ENCODE measurements at regions of chr7 and their contacts with region 1.

Region 1: DNA sequence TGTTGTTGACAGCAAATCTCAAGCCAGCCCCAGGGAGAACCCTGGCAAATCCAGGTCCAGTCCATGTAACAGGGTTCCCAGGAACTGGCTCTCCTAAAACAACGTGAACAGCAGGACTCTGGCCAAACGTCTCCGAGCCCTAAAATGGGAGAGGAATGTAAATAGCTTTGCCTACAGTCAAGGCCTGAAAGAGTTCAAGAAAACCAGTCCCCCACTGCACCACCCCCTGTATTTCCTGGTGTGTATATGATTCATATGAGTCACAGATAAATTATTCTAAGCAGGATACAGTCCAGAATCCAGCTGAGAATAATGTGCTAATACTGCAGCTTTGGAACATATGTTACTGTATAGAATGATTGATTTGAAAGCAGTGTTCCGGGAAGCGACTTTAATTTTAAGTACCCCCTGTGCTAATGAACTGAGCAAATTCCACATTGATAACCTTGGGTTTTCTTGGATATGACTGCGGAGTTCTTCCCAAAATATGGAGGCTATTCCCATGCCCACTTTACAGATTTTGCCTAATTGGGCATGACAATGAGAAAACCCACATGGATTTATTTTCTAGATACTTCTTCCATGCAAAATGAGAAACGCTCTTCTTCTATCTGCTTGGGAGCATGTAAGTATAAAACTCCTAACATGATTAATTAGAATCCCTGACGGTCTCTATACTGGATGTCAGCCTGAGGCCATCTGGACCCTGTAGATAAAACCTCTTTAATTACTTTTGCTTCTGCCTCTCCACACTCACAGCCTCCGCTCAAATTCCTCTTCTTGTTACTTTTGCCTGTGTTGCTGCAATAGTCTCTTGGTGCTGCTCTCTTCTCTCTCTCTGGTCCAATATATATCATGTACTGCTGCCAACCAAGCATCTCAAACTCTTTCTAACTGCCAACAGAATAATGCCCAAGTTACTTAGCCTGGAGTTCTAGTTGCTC is 50.2 kb downstream of the LAMB4 start:
- DNase-seq: no peak
- ATAC-seq: peak; percentile 38

Region 2: GRCh38 chr7:108026647-108027046 is 53.3 kb before region 1 on chr7:
- intact Hi-C with region 1: loop called (anchors 10 kb)
- DNase-seq: no peak
- ATAC-seq: no peak